ENCODE measurements at regions of chr9 and their contacts with region 1.

Region 1: DNA sequence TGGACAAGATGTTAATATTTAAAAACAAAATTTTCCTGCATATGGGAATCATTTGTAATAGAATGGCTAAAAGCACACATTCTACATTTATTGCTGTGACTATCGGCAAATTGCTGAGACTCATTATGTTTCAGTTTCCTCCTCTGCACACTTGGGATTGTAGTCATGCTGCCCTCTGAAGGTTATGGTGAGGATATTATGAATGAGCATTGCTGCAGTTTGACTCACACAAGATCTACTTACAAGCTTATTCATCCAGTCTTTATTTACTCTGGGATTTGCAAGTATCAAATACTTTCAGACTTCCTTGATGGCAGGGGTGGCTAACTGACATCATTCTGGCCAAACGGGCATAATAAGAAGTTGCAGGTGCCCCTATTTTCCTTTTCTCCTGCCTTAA is 9.5 kb upstream of the NFIL3 start:
- DNase-seq: no peak
- ATAC-seq: peak in 3 of 4 donors; percentile 73 to 83 (median 77)
- H3K4me3 ChIP-seq: no peak overlapping the region
- H3K27ac ChIP-seq: no peak overlapping the region
- H3K4me1 ChIP-seq: peaks cover 0 to 13% (median 0%) of the 10 kb centered on the region in 12 donors
- H3K27me3 ChIP-seq: no peaks in the 10 kb centered on the region
- CTCF ChIP-seq: peak; percentile 18 to 65 (median 52)
- POLR2A ChIP-seq: no peak

Region 2: GRCh38 chr9:91036826-91037510 is 396.2 kb before region 1 on chr9:
- intact Hi-C with region 1: loop called in 6 of 10 experiments (anchors 2 to 5 kb)
- DNase-seq: peak; percentile 76 to 82 (median 78)
- ATAC-seq: peak; percentile 86 to 99 (median 98)
- H3K4me3 ChIP-seq: no peak overlapping the region
- H3K27ac ChIP-seq: no peak overlapping the region
- H3K4me1 ChIP-seq: peaks cover 0 to 20% (median 10%) of the 10 kb centered on the region in 12 donors
- H3K27me3 ChIP-seq: peaks cover 0 to 7% (median 0%) of the 10 kb centered on the region in 9 donors
- CTCF ChIP-seq: peak; percentile 55 to 78 (median 64)
- POLR2A ChIP-seq: no peak

Region 3: GRCh38 chr9:91089405-91090129 is 343.6 kb before region 1 on chr9:
- intact Hi-C with region 1: loop called in 4 of 10 experiments (anchors 5 to 10 kb)
- DNase-seq: peak in 1 of 5 donors; percentile 40
- ATAC-seq: peak; percentile 76 to 89 (median 82)
- H3K4me3 ChIP-seq: no peak overlapping the region
- H3K27ac ChIP-seq: no peak overlapping the region
- H3K4me1 ChIP-seq: peaks cover 0 to 10% (median 0%) of the 10 kb centered on the region in 12 donors
- H3K27me3 ChIP-seq: no peaks in the 10 kb centered on the region
- CTCF ChIP-seq: peak; percentile 20 to 68 (median 52)
- POLR2A ChIP-seq: no peak

Region 4: GRCh38 chr9:91101611-91102168 is 331.5 kb before region 1 on chr9:
- intact Hi-C with region 1: loop called in 2 of 10 experiments (anchors 5 to 10 kb)
- DNase-seq: no peak
- ATAC-seq: no peak
- H3K4me3 ChIP-seq: no peak overlapping the region
- H3K27ac ChIP-seq: peak overlapping the region in 10 of 12 donors; percentile 62 to 93 (median 80)
- H3K4me1 ChIP-seq: peaks cover 3 to 41% (median 30%) of the 10 kb centered on the region in 12 donors
- H3K27me3 ChIP-seq: no peaks in the 10 kb centered on the region
- CTCF ChIP-seq: no peak
- POLR2A ChIP-seq: no peak

Region 5: GRCh38 chr9:91560285-91560684 is 127.1 kb after region 1 on chr9:
- intact Hi-C with region 1: loop called in 1 of 10 experiments (anchors 10 kb)
- DNase-seq: no peak
- ATAC-seq: no peak
- H3K4me3 ChIP-seq: no peak overlapping the region
- H3K27ac ChIP-seq: no peak overlapping the region
- H3K4me1 ChIP-seq: no peaks in the 10 kb centered on the region
- H3K27me3 ChIP-seq: no peaks in the 10 kb centered on the region
- CTCF ChIP-seq: no peak
- POLR2A ChIP-seq: no peak

Region 6: GRCh38 chr9:91681461-91682305 is 248.5 kb after region 1 on chr9:
- intact Hi-C with region 1: loop called in 5 of 10 experiments (anchors 10 kb)
- DNase-seq: peak; percentile 67 to 89 (median 79)
- ATAC-seq: peak; percentile 82 to 99 (median 96)
- H3K4me3 ChIP-seq: peak overlapping the region in 4 of 12 donors; percentile 15 to 33 (median 32)
- H3K27ac ChIP-seq: no peak overlapping the region
- H3K4me1 ChIP-seq: peaks cover 0 to 7% (median 0%) of the 10 kb centered on the region in 12 donors
- H3K27me3 ChIP-seq: peaks cover 0 to 7% (median 0%) of the 10 kb centered on the region in 9 donors
- CTCF ChIP-seq: peak; percentile 80 to 94 (median 86)
- POLR2A ChIP-seq: no peak